ENCODE measurements at regions of chr11 and their contacts with region 1.

Region 1: GRCh38 chr11:123407130-123407995 is 22.7 kb upstream of the GRAMD1B start:
- DNase-seq: peak; percentile 77
- ATAC-seq: peak; percentile 85
- H3K4me3 Mint-ChIP-seq: peak overlapping the region; percentile 65
- H3K27ac Mint-ChIP-seq: no peak overlapping the region
- H3K4me1 Mint-ChIP-seq: peaks cover 30% of the 10 kb centered on the region
- H3K27me3 Mint-ChIP-seq: peaks cover 8% of the 10 kb centered on the region

Region 2: DNA sequence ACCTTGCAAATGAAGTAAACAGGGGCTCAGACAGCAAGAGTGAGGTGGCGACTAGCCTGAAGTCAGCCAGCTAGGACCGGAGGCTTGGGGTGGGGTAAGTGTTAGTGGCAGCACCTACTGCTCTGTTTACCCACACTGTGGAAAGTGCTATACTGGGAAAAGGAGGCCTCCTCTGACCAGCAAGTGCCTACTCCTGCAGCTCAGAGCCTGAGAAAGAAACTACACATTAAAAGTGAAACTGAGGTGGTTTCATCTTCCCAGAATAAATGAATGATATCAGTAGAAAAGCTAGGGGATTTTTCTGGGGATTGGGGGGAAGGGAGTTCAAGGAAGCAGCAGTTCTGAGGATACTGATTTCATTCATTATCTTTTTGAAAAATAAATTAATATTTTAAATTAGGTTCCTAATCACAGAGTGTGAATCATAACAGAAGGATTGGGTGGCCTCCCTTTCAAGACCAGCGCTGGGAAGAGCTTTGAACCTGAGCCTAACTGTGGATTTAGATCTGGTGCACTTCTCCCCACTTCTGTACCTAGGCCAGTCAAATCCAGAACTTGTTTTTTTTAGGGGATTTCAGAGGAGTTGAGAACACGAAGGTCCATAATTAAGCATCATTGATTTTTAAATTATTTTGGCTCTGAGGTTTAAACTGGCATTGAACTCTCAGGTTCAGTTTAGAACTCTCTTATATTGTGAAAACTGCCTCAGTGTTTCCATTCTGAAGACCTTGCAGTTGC is 25.4 kb before region 1 on chr11:
- CTCF ChIA-PET with region 1: interaction called, 25 read pairs
- POLR2A ChIA-PET with region 1: interaction called, 6 read pairs
- DNase-seq: peak; percentile 67
- ATAC-seq: peak; percentile 98
- H3K4me3 Mint-ChIP-seq: peak overlapping the region; percentile 54
- H3K27ac Mint-ChIP-seq: peak overlapping the region; percentile 76
- H3K4me1 Mint-ChIP-seq: peaks cover 31% of the 10 kb centered on the region
- H3K27me3 Mint-ChIP-seq: peaks cover 2% of the 10 kb centered on the region

Region 3: DNA sequence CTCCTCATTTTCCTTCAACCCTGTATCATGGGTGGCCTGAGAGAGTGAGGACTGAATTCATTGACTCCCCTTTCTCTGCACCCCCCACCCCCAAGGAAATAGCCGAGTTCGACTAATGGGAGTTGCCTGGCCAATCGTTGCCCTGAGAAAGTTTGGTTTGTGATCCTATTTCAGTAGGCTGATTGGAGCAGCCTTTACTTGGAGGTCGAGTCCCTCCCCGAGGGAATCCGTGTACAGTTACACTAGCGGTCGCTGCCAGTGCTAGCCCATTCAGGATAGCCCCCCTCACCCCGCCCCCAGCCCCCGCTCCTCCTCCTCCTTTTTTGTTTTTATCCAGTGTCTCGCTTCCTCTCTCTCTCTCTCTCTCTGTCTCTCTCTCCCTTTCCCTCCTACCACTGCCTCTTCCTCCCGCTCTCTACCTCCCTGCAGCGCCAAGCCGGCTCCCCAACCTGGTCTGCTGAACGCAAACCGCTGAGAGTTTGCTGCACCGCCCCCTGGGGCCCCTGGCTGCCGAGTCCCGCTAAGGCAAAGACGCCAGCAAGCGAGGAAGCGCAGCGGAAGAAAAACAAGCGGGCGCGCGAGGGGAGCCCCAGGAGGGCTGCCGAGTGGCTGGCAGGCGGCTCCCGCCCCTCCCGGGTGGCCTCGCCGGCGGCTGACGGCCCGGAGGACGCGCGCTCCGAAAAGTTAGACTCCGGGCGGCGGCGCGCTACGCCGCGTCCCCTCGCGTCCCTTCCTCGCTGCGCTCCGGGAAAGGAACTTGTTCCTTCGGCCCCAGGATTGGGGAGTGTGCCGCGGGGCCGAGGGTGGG is 22.8 kb after region 1 on chr11 and contains the start of gene GRAMD1B:
- CTCF ChIA-PET with region 1: interaction called, 128 read pairs
- POLR2A ChIA-PET with region 1: no interaction called
- DNase-seq: peak; percentile 90
- ATAC-seq: peak; percentile 85
- H3K4me3 Mint-ChIP-seq: peak within 1 kb of the TSS; percentile 88
- H3K27ac Mint-ChIP-seq: peak within 1 kb of the TSS; percentile 96
- H3K4me1 Mint-ChIP-seq: peaks cover 47% of the 10 kb centered on the region
- H3K27me3 Mint-ChIP-seq: peaks cover 3% of the 10 kb centered on the region
- total RNA-seq, gene GRAMD1B: 22.8 to 26.0 TPM

Region 4: GRCh38 chr11:123469089-123469488 is 61.7 kb after region 1 on chr11:
- CTCF ChIA-PET with region 1: interaction called, 374 read pairs
- POLR2A ChIA-PET with region 1: no interaction called
- DNase-seq: no peak
- ATAC-seq: no peak
- H3K4me3 Mint-ChIP-seq: no peak overlapping the region
- H3K27ac Mint-ChIP-seq: no peak overlapping the region
- H3K4me1 Mint-ChIP-seq: peaks cover 27% of the 10 kb centered on the region
- H3K27me3 Mint-ChIP-seq: no peaks in the 10 kb centered on the region

Region 5: DNA sequence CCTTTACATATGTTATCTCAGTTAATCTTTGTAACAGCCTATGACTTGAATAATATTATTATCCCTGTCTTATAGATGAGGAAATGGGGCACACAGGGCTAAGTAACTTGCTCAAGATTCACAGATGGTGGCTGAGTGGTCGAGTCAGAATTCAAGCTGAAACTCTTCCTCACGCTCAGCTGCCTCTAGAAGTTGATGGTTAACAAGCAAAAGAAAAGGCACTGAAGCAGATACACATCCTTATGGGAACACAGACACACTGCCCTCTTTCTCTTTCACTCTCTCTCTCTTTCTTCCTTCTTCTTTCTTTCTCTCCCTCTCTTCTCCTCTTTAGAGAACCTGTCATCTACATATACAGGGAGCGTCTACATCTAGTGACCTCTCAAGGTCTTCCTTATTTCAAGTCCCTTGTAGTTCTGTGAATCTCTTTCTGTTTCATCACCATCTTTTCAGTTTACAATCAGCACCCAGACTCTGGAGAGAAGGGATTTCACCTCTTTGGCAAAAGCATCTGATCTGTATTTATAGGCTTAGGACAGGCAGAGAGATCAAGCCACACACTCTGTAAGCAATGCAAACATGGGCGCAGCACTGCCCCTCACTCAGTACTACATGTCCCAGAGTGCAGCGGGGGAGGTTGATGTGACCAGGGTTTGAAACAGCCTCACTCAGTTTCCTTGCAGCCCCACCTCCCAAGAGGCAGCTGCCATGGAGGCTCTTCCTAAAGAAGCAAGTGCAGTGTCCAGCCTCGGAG is 98.4 kb after region 1 on chr11:
- CTCF ChIA-PET with region 1: interaction called, 10 read pairs
- POLR2A ChIA-PET with region 1: no interaction called
- DNase-seq: no peak
- ATAC-seq: no peak
- H3K4me3 Mint-ChIP-seq: no peak overlapping the region
- H3K27ac Mint-ChIP-seq: peak overlapping the region; percentile 5
- H3K4me1 Mint-ChIP-seq: peaks cover 40% of the 10 kb centered on the region
- H3K27me3 Mint-ChIP-seq: no peaks in the 10 kb centered on the region

Region 6: DNA sequence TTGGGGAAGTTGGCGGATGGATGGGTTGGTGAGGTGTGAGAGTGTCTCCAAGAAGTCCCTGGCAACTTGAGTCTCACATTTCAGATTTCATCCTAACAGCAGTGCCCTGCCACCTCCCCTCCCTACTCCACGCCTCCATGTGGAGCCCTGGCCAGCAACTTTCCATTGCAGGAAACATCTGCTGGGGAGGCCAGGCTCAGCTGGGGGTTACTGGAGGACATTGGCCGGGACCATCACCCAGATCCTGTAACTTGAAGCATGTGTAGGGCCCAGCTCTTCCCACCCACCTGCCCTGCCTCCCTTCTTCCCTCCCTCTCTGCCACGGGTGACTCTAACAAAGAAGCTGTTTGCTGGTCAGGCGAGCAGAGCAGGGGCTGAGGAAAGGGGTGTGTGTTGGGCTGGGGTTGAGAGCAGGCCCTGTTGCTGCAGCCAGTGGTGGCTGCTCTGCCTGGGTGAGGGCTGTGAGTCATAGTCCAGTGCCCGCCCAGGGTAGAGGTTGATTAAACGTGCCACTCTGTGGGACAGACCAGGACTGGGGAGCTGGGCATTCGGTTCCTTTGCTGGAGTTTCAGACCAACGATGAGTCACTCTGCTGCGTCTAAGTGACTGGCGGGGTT is 183.0 kb after region 1 on chr11:
- CTCF ChIA-PET with region 1: no interaction called
- POLR2A ChIA-PET with region 1: no interaction called
- DNase-seq: no peak
- ATAC-seq: no peak
- H3K4me3 Mint-ChIP-seq: no peak overlapping the region
- H3K27ac Mint-ChIP-seq: no peak overlapping the region
- H3K4me1 Mint-ChIP-seq: no peaks in the 10 kb centered on the region
- H3K27me3 Mint-ChIP-seq: no peaks in the 10 kb centered on the region

Region 7: DNA sequence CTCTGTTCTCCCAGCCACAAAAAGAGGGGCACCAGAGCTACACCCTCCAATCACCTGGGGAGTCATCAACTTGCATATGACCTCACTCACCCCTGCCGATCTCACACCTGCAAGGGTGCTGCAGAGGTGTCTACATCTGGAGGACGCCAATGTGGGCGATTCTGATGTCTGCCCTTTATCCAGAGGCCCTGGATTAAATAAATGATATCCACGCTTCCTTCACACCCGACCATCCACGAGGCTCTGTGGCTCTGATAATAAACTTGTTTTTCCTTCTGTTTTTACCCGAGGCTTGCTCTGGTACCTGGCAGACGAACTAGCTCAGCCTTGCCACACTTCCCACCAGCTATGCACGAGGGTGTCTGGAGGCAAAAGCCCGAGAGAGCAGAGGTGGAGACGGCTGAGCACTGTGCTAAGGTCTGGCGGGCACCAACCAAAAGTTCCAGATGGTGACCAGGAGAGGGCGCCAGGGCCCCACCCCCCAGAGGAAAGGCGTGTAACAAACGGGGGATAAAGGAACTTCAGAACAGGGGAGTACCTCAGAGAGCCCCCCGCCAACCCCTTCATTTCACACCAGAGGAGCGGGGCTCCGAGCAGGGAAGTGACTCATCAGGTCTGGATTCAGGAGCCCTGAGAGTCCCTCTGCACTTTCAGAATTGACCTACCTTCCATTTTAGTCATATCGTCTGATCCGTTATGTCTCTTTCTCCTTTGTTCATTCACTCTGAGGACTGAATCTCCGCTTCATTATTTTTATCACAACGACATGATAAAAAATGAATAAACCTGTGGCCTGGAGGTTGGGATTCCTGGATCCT is 233.5 kb after region 1 on chr11:
- CTCF ChIA-PET with region 1: no interaction called
- POLR2A ChIA-PET with region 1: no interaction called
- DNase-seq: peak; percentile 65
- ATAC-seq: peak; percentile 87
- H3K4me3 Mint-ChIP-seq: no peak overlapping the region
- H3K27ac Mint-ChIP-seq: no peak overlapping the region
- H3K4me1 Mint-ChIP-seq: peaks cover 2% of the 10 kb centered on the region
- H3K27me3 Mint-ChIP-seq: peaks cover 4% of the 10 kb centered on the region

Measured in activated CD8-positive, alpha-beta T cell treated with anti-CD3 and anti-CD28 coated beads, Interleukin-2, amount 10 ng/mL, durations not matched to agents 7 days and 5 days (primary cell).